ENCODE measurements at regions of chr9 and their contacts with region 1.

Region 1: GRCh38 chr9:129737479-129738274 is 15.2 kb downstream of the PTGES start:
- DNase-seq: peak; percentile 81 to 90 (median 84)
- H3K4me3 ChIP-seq: peak overlapping the region; percentile 66 to 69
- H3K4me3 Mint-ChIP-seq: peak overlapping the region; percentile 76 to 86 (median 80)
- H3K27ac ChIP-seq: peak overlapping the region; percentile 65
- H3K27ac Mint-ChIP-seq: peak overlapping the region; percentile 44 to 95 (median 73)
- H3K4me1 ChIP-seq: peaks cover 13% of the 10 kb centered on the region
- H3K4me1 Mint-ChIP-seq: peaks cover 5 to 13% (median 10%) of the 10 kb centered on the region in 4 donors
- H3K27me3 ChIP-seq: no peaks in the 10 kb centered on the region
- H3K27me3 Mint-ChIP-seq: peaks cover 0 to 2% of the 10 kb centered on the region in 2 donors

Region 2: DNA sequence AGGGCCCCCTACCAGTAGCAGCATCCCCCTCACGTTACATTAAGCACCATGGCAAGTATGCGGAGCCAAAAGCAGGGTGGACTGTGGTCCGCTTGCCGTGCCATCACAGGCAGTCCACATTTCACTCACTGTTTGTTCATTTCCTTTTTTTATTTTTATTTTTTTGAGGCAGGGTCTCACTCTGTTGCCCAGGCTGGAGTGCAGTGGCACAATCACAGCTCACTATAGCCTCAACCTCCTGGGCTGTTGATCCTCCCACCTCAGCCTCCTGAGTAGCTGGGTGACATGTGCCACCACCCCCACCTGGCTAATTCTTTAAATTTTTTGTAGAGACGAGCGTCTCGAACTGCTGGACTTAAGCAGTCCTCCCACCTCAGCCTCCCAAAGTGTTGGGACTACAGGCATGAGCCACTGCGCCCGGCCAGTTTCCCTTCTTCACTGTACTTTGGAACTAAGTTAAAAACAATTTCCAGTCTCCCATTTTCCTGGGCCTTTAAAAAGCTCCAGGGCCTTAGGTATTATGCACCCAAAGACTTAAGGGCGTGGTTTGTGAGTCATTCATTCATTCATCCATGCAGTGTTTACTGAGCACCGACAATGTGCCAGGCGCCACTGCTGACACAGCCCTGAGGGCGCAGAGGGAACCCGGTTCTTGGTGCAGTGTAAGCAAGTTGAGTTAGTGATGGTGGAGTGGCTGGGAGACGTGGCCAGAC is 52.3 kb before region 1 on chr9:
- CTCF ChIA-PET with region 1: no interaction called
- POLR2A ChIA-PET with region 1: no interaction called
- intact Hi-C with region 1: no loop called
- DNase-seq: no peak
- H3K4me3 ChIP-seq: no peak overlapping the region
- H3K4me3 Mint-ChIP-seq: no peak overlapping the region
- H3K27ac ChIP-seq: no peak overlapping the region
- H3K27ac Mint-ChIP-seq: peak overlapping the region in 1 of 7 donors; percentile 17
- H3K4me1 ChIP-seq: no peaks in the 10 kb centered on the region
- H3K4me1 Mint-ChIP-seq: no peaks in the 10 kb centered on the region
- H3K27me3 ChIP-seq: no peaks in the 10 kb centered on the region
- H3K27me3 Mint-ChIP-seq: peaks cover 4 to 7% of the 10 kb centered on the region in 2 donors

Region 3: GRCh38 chr9:129712634-129713401 is 24.9 kb before region 1 on chr9:
- CTCF ChIA-PET with region 1: no interaction called
- POLR2A ChIA-PET with region 1: no interaction called
- intact Hi-C with region 1: no loop called
- DNase-seq: no peak
- H3K4me3 ChIP-seq: no peak overlapping the region
- H3K4me3 Mint-ChIP-seq: no peak overlapping the region
- H3K27ac ChIP-seq: no peak overlapping the region
- H3K27ac Mint-ChIP-seq: peak overlapping the region in 2 of 7 donors; percentile 13 to 51
- H3K4me1 ChIP-seq: peaks cover 20% of the 10 kb centered on the region
- H3K4me1 Mint-ChIP-seq: peaks cover 5 to 18% (median 14%) of the 10 kb centered on the region in 4 donors
- H3K27me3 ChIP-seq: no peaks in the 10 kb centered on the region
- H3K27me3 Mint-ChIP-seq: peaks cover 2 to 4% of the 10 kb centered on the region in 2 donors

Region 4: GRCh38 chr9:129726322-129727160 is 11.1 kb before region 1 on chr9:
- CTCF ChIA-PET with region 1: interaction called, 55 read pairs
- POLR2A ChIA-PET with region 1: interaction called, 11 read pairs
- intact Hi-C with region 1: no loop called
- DNase-seq: peak in 4 of 5 donors; percentile 49 to 52 (median 50)
- H3K4me3 ChIP-seq: no peak overlapping the region
- H3K4me3 Mint-ChIP-seq: peak overlapping the region in 4 of 8 donors; percentile 35 to 55 (median 46)
- H3K27ac ChIP-seq: no peak overlapping the region
- H3K27ac Mint-ChIP-seq: peak overlapping the region in 1 of 7 donors; percentile 35
- H3K4me1 ChIP-seq: no peaks in the 10 kb centered on the region
- H3K4me1 Mint-ChIP-seq: peaks cover 0 to 4% (median under 1%) of the 10 kb centered on the region in 4 donors
- H3K27me3 ChIP-seq: no peaks in the 10 kb centered on the region
- H3K27me3 Mint-ChIP-seq: peaks cover 0 to 6% of the 10 kb centered on the region in 2 donors

Region 5: DNA sequence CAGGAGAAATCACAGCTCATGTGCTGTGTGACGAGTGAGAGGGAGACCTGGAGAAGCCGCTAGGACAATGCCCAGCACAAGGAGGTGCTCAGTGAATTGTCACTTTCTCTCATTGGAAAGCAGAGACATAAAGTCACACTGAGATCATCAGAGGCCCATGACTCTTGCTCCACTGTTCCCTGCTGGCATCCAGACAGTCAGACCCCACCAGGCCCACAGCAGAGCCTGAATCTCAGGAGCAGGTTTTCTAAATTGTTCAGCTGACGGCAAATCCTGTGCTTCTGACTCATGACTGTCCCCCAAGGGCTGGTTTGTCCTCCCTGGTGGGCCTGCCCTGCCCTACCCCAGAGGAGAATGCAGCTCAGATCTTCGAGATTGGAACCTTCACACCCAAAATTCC is 12.3 kb after region 1 on chr9:
- CTCF ChIA-PET with region 1: interaction called, 10 read pairs
- POLR2A ChIA-PET with region 1: interaction called, 4 read pairs
- intact Hi-C with region 1: no loop called
- DNase-seq: no peak
- H3K4me3 ChIP-seq: no peak overlapping the region
- H3K4me3 Mint-ChIP-seq: no peak overlapping the region
- H3K27ac ChIP-seq: no peak overlapping the region
- H3K27ac Mint-ChIP-seq: no peak overlapping the region
- H3K4me1 ChIP-seq: peaks cover 10% of the 10 kb centered on the region
- H3K4me1 Mint-ChIP-seq: peaks cover 0 to 10% (median 4%) of the 10 kb centered on the region in 4 donors
- H3K27me3 ChIP-seq: no peaks in the 10 kb centered on the region
- H3K27me3 Mint-ChIP-seq: no peaks in the 10 kb centered on the region

Region 6: GRCh38 chr9:129776938-129777768 is 39.5 kb after region 1 on chr9:
- CTCF ChIA-PET with region 1: interaction called, 77 read pairs
- POLR2A ChIA-PET with region 1: interaction called, 5 read pairs
- intact Hi-C with region 1: no loop called
- DNase-seq: peak in 4 of 5 donors; percentile 5 to 75 (median 12)
- H3K4me3 ChIP-seq: no peak overlapping the region
- H3K4me3 Mint-ChIP-seq: peak overlapping the region in 2 of 8 donors; percentile 44 to 56
- H3K27ac ChIP-seq: no peak overlapping the region
- H3K27ac Mint-ChIP-seq: peak overlapping the region in 2 of 7 donors; percentile 17 to 50
- H3K4me1 ChIP-seq: peaks cover 10% of the 10 kb centered on the region
- H3K4me1 Mint-ChIP-seq: peaks cover 2 to 10% (median 7%) of the 10 kb centered on the region in 4 donors
- H3K27me3 ChIP-seq: no peaks in the 10 kb centered on the region
- H3K27me3 Mint-ChIP-seq: peaks cover 10 to 12% of the 10 kb centered on the region in 2 donors

Region 7: DNA sequence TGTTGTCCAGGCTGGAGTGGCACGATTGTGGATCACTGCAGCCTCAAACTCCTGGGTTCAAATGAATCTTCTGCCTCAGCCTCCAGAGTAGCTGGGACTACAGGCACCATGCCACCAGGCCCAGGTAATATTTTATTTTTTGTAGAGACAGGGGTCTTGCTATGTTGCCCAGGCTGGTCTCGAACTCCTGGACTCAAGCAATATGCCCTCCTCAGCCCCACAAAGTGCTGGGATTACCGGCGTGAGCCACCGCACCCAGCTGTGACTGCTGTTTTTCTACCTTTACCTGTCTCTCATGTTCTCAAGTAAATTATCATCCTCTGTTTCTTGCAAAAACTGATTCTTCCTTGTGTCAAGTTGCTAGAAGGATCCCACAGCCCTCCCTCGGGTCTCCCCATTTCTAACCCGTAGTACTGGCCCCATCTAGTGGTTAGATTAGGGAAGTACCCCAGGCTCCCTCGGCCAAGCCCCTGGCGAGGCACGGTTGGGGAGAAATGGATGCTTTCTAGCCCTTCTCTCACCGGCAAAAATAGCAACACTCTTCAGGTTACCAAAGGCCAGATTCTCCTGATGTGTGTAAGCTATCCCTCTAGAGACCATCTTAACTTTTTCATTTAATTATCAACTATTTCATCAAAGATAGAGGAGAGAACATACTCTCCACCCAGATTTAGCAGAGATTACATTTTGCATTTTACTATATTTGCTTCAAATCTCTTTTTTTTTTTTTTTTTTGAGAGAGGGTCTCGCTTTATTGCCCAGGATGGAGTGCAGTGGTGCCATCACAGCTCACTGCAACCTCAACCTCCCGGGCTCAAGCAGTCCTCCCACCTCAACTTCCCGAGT is 46.1 kb after region 1 on chr9:
- CTCF ChIA-PET with region 1: interaction called, 77 read pairs
- POLR2A ChIA-PET with region 1: interaction called, 7 read pairs
- intact Hi-C with region 1: loop called (anchors 1 kb)
- DNase-seq: peak; percentile 68 to 78 (median 74)
- H3K4me3 ChIP-seq: no peak overlapping the region
- H3K4me3 Mint-ChIP-seq: no peak overlapping the region
- H3K27ac ChIP-seq: no peak overlapping the region
- H3K27ac Mint-ChIP-seq: peak overlapping the region in 2 of 7 donors; percentile 20 to 61
- H3K4me1 ChIP-seq: peaks cover 3% of the 10 kb centered on the region
- H3K4me1 Mint-ChIP-seq: peaks cover 0 to 4% (median 3%) of the 10 kb centered on the region in 4 donors
- H3K27me3 ChIP-seq: no peaks in the 10 kb centered on the region
- H3K27me3 Mint-ChIP-seq: peaks cover 5 to 6% of the 10 kb centered on the region in 2 donors

Region 8: DNA sequence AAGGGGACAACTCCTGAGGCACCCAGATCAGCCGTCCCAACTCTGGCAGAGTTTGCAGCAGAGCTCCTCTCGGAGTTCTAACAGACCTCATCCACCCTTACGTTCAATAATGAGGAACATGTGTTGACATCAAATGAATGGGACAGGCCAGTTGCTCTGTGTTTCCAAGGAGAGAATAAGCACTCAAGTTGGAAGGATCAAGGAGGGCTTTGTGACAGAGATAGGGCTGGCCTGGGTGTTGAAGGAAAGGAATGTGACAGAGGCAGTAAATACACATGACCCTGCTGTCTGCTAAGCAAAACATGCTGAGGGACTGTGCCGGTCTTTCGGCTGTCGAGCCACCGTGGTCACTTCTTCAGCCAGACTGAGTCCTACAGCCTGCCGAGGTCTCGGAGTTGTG is 364.2 kb after region 1 on chr9:
- CTCF ChIA-PET with region 1: interaction called, 10 read pairs
- POLR2A ChIA-PET with region 1: no interaction called
- intact Hi-C with region 1: no loop called
- DNase-seq: no peak
- H3K4me3 ChIP-seq: no peak overlapping the region
- H3K4me3 Mint-ChIP-seq: no peak overlapping the region
- H3K27ac ChIP-seq: no peak overlapping the region
- H3K27ac Mint-ChIP-seq: no peak overlapping the region
- H3K4me1 ChIP-seq: peaks cover 2% of the 10 kb centered on the region
- H3K4me1 Mint-ChIP-seq: peaks cover 4 to 12% (median 7%) of the 10 kb centered on the region in 4 donors
- H3K27me3 ChIP-seq: no peaks in the 10 kb centered on the region
- H3K27me3 Mint-ChIP-seq: no peaks in the 10 kb centered on the region

Region 9: DNA sequence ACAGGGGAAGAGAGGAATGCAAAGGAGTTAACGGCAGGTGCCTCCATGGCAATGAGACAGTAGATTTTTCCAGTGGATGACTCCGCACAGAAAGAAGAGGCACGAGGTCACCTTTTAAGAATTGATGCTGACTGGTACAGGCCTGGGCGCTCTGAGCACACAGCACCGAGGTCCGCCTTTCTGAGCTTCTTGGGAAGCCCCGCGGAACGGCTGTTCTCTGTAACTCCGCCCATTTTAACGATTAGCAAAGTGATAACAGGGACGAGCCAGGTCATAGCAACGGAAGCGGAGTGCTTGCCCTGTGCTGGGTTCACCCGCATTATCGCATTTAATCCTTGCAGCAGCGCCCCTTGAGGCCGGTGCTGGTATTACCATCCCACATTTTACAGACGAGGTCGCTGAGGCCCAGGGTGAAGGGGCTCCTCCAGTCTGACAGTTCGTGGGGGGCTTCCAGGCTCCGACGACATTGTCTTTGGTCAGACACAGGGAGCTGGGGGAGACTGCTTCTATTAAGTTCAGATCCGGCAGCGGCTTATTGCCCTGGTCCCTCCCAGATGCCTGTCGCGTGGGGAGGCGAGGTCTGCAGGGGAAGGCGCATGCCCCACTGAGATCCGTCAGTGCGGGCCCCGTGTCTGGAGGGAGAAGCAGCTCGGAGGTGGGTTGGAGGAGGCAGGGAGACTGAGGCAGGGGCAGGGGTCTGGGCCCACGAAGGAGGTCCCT is 505.5 kb after region 1 on chr9:
- CTCF ChIA-PET with region 1: interaction called, 4 read pairs
- POLR2A ChIA-PET with region 1: no interaction called
- intact Hi-C with region 1: loop called (anchors 5 kb)
- DNase-seq: peak; percentile 74 to 81 (median 75)
- H3K4me3 ChIP-seq: peak overlapping the region in 1 of 2 donors; percentile 44
- H3K4me3 Mint-ChIP-seq: peak overlapping the region; percentile 72 to 87 (median 82)
- H3K27ac ChIP-seq: no peak overlapping the region
- H3K27ac Mint-ChIP-seq: peak overlapping the region; percentile 29 to 90 (median 83)
- H3K4me1 ChIP-seq: peaks cover 33% of the 10 kb centered on the region
- H3K4me1 Mint-ChIP-seq: peaks cover 18 to 50% (median 26%) of the 10 kb centered on the region in 4 donors
- H3K27me3 ChIP-seq: no peaks in the 10 kb centered on the region
- H3K27me3 Mint-ChIP-seq: no peaks in the 10 kb centered on the region